ENCODE measurements at regions of chr9 and their contacts with region 1.

Region 1: GRCh38 chr9:97943308-97943855 is 5.4 kb upstream of the HEMGN start:
- DNase-seq: peak; percentile 73 to 92 (median 81)
- ATAC-seq: peak; percentile 76
- H3K4me3 ChIP-seq: no peak overlapping the region
- H3K27ac ChIP-seq: peak overlapping the region; percentile 79
- H3K4me1 ChIP-seq: peaks cover 34 to 63% of the 10 kb centered on the region in 2 experiments; a peak in 4 of 5 replicates
- H3K27me3 ChIP-seq: no peaks in the 10 kb centered on the region
- CTCF ChIP-seq: no peak
- EP300 ChIP-seq: peak; percentile 99
- POLR2A ChIP-seq: no peak
- RAD21 ChIP-seq: no peak

Region 2: DNA sequence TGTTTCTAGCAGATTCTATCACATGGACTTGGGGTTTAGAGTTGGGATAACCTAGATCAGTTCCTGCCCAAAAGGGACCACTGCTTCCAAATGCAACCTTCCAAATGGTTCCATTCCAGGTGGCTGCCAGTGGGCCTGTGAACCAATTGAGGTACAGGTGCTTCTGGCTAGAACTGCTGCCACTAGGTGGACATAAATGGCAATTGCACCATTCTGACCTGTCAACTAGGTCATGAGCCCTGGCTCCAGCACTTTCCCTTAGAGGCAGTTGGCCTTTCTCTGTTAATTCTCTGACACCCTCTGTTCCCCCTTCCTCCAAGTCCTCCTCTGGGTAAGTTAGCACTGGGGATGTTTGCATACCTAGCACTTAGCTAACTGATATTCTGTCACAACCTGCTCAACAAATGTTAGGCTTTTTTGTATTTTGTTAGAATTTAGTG is 11.2 kb after region 1 on chr9:
- CTCF ChIA-PET with region 1: no interaction called
- POLR2A ChIA-PET with region 1: interaction called, 9 read pairs
- in situ Hi-C with region 1: no loop called
- intact Hi-C with region 1: loop called (anchors 2 kb)
- DNase-seq: peak; percentile 67 to 92 (median 76)
- ATAC-seq: peak; percentile 94
- H3K4me3 ChIP-seq: no peak overlapping the region
- H3K27ac ChIP-seq: peak overlapping the region; percentile 64
- H3K4me1 ChIP-seq: peaks cover 25 to 34% of the 10 kb centered on the region in 2 experiments; a peak in 4 of 5 replicates
- H3K27me3 ChIP-seq: no peaks in the 10 kb centered on the region
- CTCF ChIP-seq: peak; percentile 88 to 92 (median 88)
- EP300 ChIP-seq: peak; percentile 28
- POLR2A ChIP-seq: no peak
- RAD21 ChIP-seq: peak; percentile 83 to 94

Region 3: DNA sequence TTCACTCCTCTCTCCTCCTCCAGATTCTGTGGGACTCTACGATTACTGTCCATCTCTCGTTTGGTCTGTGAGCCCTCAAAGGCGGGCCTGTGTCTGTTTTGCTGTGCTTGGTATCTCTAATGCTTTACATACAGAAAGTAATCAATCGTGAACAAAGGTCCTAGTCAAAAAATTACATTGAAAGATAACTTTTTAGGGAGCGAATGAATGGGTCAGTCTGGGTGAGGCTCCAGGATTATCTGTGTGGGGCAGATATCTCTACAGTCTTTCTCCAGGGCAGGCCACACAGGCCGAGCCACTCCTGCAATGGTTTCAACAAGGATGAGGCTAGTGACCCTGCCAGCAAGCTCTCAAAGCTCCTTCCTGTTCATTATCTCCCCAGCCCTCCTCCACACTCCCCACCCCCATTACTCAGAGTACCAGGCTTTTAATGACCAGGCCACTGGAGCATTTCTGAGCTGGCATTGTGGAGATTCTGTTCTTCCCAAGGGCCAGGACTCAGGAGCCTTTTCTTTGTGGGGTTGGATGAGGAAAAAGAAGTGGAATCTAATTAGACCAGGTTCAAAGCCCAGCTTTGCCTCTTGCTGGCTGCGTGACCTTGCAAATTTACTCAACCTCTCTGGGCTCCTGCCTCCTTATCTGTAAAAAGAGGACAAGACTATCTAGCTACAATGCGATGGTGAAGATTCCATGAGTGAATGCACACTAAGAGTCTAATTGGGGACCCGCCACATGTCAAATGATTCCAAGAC is 238.9 kb after region 1 on chr9:
- CTCF ChIA-PET with region 1: no interaction called
- POLR2A ChIA-PET with region 1: no interaction called
- in situ Hi-C with region 1: no loop called
- intact Hi-C with region 1: loop called (anchors 5 kb)
- DNase-seq: peak; percentile 64 to 96 (median 80)
- ATAC-seq: peak; percentile 90
- H3K4me3 ChIP-seq: peak overlapping the region; percentile 22; the same call in 1 of the 2 replicates
- H3K27ac ChIP-seq: peak overlapping the region; percentile 80
- H3K4me1 ChIP-seq: peaks cover 45 to 62% of the 10 kb centered on the region in 2 experiments
- H3K27me3 ChIP-seq: no peaks in the 10 kb centered on the region
- CTCF ChIP-seq: no peak
- EP300 ChIP-seq: peak; percentile 91
- POLR2A ChIP-seq: no peak; the same call in 1 of the 2 replicates
- RAD21 ChIP-seq: 0 out of 4 replicates have a peak, but pooled peaks of 1 of the 2 experiments have one; percentile 12

Measured in K562 (cell line).